ENCODE measurements at regions of chrX and their contacts with region 1.

Region 1: GRCh38 chrX:151680805-151681204 is 14.5 kb upstream of the PRRG3 start:
- DNase-seq: peak; percentile 83
- H3K4me3 Mint-ChIP-seq: no peak overlapping the region
- H3K27ac Mint-ChIP-seq: no peak overlapping the region
- H3K4me1 Mint-ChIP-seq: peaks cover 6% of the 10 kb centered on the region
- H3K27me3 Mint-ChIP-seq: peaks cover 10% of the 10 kb centered on the region

Region 2: DNA sequence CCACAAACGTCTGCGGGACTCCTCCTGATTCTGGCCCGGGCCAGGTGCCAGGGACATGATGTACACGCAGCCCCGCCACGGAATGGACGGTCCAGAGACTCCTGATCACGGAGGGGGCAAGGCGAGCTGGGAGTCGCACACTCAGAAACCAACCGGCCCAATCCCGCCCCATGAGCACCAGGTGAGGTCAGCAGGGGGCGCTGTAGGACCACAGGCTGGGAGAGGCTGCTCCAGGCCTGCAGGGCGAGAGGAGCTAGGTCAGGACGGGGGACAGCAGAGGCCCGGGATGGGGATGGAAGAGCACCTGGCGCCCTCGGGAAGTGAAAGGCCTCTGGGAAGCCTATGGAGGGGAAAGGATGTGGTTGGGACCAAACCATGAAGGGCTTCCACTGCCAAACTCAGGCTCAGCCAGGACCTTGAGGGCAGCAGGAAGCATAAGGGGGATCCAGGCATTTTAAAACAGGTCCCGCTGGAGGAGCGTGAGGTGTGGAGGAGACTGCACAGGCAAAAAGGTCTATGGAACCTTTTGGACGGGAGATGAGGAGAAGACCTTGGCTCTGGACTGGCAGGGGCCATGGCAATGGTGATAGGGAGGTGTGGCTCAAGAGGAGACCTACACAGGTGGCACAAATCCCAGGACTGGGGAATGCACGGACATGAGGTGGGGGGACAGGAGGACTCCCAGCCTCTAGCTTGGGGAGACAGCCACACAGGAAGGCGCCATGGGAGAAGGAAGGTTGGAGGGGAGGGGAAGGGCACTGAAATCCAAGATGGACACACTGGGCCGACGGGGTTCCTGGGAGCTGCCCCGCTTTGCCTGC is 908.4 kb before region 1 on chrX:
- intact Hi-C with region 1: loop called (anchors 5 kb)
- DNase-seq: peak; percentile 92
- H3K4me3 Mint-ChIP-seq: no peak overlapping the region
- H3K27ac Mint-ChIP-seq: no peak overlapping the region
- H3K4me1 Mint-ChIP-seq: peaks cover 2% of the 10 kb centered on the region
- H3K27me3 Mint-ChIP-seq: no peaks in the 10 kb centered on the region

Region 3: GRCh38 chrX:151151665-151152267 is 529.0 kb before region 1 on chrX:
- intact Hi-C with region 1: loop called (anchors 1 kb)
- DNase-seq: peak; percentile 73
- H3K4me3 Mint-ChIP-seq: no peak overlapping the region
- H3K27ac Mint-ChIP-seq: no peak overlapping the region
- H3K4me1 Mint-ChIP-seq: no peaks in the 10 kb centered on the region
- H3K27me3 Mint-ChIP-seq: peaks cover 17% of the 10 kb centered on the region

Region 4: DNA sequence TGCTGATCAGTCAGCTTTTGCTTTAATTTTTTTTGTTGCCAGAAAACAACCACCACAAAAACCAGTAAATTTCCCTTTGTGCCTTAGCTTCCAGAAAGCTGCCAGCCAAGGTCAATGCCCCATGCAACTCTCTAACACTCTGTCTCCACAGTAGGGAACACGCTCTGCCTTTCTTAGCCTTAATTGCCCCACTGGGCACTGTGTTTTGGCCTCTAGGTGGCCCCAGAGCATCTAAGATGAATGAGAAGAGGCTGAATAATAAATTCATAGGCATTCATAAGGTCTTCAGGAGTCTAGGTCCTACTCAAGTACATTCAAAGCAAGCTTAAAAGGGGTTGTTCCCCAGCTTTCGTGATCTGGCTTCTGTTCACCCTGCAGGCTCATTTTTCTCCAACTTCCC is 175.0 kb before region 1 on chrX:
- intact Hi-C with region 1: loop called (anchors 10 kb)
- DNase-seq: peak; percentile 57
- H3K4me3 Mint-ChIP-seq: no peak overlapping the region
- H3K27ac Mint-ChIP-seq: no peak overlapping the region
- H3K4me1 Mint-ChIP-seq: no peaks in the 10 kb centered on the region
- H3K27me3 Mint-ChIP-seq: no peaks in the 10 kb centered on the region

Region 5: DNA sequence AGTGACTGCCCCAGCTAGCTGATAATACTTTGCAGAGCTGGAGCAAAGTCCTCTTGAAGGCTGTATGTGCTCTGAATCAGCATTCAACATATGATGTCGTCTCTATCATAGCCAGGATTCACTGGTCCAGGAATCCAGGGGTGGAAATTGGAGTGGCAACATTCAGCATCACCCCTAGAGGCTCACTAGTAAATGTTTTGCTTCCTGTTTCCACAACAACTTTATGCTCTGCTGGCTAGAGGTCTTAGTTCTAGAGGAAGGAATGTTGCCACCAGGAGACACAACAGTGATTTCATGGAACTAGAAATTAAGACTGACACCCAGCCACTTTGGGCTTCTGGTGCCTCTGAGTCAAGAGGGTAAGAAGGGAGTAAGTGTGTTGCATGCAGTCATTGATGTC is 1509.6 kb after region 1 on chrX:
- intact Hi-C with region 1: no loop called
- DNase-seq: no peak
- H3K4me3 Mint-ChIP-seq: no peak overlapping the region
- H3K27ac Mint-ChIP-seq: no peak overlapping the region
- H3K4me1 Mint-ChIP-seq: no peaks in the 10 kb centered on the region
- H3K27me3 Mint-ChIP-seq: peaks cover 13% of the 10 kb centered on the region

Measured in activated CD4-positive, alpha-beta T cell treated with anti-CD3 and anti-CD28 coated beads, Interleukin-2, amount 10 ng/mL, durations not matched to agents 24 days and 14 days (primary cell).